ENCODE measurements at regions of chr7 and their contacts with region 1.

Region 1: GRCh38 chr7:23474094-23474828 is 4.0 kb upstream of the IGF2BP3 start:
- DNase-seq: peak; percentile 91
- H3K4me3 Mint-ChIP-seq: peak overlapping the region; percentile 76
- H3K27ac Mint-ChIP-seq: peak overlapping the region; percentile 30
- H3K4me1 Mint-ChIP-seq: peaks cover 22% of the 10 kb centered on the region
- H3K27me3 Mint-ChIP-seq: peaks cover 57% of the 10 kb centered on the region

Region 2: DNA sequence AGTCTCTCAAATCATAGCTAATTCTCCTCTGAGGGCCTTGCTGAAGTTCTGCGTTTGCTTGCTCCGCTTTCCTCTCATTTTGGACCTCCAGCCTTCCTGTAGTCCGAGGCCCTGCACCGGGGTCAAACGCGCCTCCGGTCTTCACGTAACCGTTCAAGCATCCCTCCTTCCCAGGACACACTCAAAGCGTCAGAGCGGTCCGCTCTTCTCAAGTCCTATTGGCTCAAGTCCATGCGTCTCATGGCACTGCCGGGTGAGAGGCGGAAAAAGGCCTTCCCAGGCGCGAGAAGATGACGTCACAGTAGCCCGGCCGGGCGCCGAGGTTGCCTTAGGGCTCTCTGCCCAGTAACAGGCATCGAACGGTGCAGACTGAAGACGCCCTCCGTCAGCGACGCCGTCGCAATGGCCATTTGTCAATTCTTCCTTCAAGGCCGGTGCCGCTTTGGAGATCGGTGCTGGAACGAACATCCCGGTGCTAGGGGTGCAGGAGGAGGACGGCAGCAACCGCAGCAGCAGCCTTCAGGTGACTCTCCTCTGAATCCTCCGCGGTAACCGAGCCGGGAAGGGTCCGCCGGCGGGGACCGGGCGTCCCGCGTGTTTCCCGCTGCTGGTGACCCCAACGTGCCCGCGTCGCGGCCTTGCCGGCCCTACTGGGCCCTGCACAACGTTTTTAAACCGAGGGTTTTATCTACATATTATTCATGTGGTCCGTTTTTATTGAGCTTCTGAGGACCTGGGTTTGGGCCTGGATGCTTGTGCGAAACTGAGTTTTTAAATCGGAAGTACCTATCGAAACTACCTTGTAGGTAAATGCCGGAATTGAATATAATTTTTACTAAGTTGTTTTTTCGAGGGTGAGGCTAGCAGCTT is 292.3 kb before region 1 on chr7 and contains the start of gene NUP42:
- CTCF ChIA-PET with region 1: no interaction called
- intact Hi-C with region 1: loop called (anchors 2 kb)
- DNase-seq: peak; percentile 98
- H3K4me3 Mint-ChIP-seq: peak within 1 kb of the TSS; percentile 99
- H3K27ac Mint-ChIP-seq: peak within 1 kb of the TSS; percentile 99
- H3K4me1 Mint-ChIP-seq: peaks cover 35% of the 10 kb centered on the region
- H3K27me3 Mint-ChIP-seq: no peaks in the 10 kb centered on the region
- total RNA-seq, gene NUP42: 15.2 to 17.0 TPM

Region 3: DNA sequence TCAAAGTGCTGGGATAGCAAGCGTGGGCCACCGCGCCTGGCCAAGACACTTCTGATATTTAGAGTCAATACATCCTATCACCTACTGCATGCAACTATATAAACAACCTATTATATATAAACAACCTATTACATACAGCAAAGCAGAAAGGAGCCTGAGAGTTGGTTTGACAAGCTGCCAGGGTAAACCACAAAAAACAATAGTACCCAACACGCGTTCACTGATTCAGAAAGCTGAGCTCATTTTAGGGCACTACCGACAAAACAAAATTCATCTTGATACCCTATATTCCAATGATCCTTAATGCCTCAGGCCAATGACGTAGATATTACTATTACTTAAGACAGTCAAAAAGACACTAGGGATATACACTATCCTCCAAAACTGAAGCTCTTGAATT is 158.9 kb before region 1 on chr7:
- CTCF ChIA-PET with region 1: no interaction called
- intact Hi-C with region 1: no loop called
- DNase-seq: no peak
- H3K4me3 Mint-ChIP-seq: no peak overlapping the region
- H3K27ac Mint-ChIP-seq: no peak overlapping the region
- H3K4me1 Mint-ChIP-seq: peaks cover 1% of the 10 kb centered on the region
- H3K27me3 Mint-ChIP-seq: no peaks in the 10 kb centered on the region

Region 4: DNA sequence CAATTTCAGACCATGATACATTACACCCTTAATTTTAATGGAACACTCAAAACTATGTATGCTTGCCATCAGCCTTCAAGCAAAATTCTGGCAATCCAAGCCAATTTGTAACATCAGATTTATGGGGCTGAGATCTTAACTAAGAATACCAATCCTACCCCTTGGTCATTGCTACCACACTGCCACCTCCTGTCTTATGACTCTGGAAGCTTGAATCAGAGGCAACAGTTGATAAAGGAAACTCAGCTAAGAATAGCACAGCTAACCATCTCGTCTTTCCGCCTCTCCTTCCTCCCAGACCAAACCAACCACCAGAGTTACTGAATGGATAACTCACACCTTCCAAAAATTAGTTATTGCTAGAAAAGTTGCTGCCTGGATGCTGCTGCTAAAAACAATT is 11.4 kb before region 1 on chr7:
- CTCF ChIA-PET with region 1: interaction called, 12 read pairs
- intact Hi-C with region 1: loop called (anchors 1 kb)
- DNase-seq: peak; percentile 56
- H3K4me3 Mint-ChIP-seq: no peak overlapping the region
- H3K27ac Mint-ChIP-seq: no peak overlapping the region
- H3K4me1 Mint-ChIP-seq: peaks cover 5% of the 10 kb centered on the region
- H3K27me3 Mint-ChIP-seq: peaks cover 64% of the 10 kb centered on the region

Region 5: DNA sequence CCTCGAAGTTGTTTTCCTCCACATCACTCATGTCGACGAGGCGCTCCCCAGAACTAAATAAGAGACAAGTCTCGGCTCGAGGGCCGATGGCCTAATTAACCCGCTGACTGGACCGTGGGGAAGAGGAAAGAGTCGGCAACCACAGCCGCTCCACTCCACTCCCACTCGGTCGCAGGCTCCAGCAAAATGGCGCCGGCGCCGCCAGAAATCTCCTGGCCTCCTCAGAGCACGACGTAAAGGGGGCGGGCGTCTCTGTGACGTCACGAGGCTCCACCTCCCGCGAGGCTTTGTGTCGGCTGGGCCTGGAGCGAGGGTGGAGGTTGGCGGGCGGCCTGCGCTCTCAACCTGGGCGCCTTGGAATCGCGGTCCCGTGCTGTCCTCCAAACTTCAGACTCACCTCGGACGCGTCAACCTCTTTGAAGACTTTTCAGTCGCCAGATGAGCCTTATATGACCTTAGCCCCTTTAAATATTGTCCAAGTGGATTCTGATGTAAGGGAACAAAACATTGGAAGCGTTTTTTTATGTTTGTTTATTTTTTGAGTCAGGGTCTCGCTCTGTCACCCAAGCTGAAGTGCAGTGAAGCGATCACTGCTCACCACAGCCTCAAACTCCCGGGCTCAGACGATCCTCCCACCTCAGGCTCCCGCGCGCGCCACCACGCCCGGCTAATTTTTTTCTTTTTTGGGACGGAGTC is 57.7 kb after region 1 on chr7 and contains the start of gene TRA2A:
- CTCF ChIA-PET with region 1: no interaction called
- intact Hi-C with region 1: loop called (anchors 1 kb)
- DNase-seq: peak; percentile 99
- H3K4me3 Mint-ChIP-seq: peak within 1 kb of the TSS; percentile 99
- H3K27ac Mint-ChIP-seq: peak within 1 kb of the TSS; percentile 100
- H3K4me1 Mint-ChIP-seq: peaks cover 43% of the 10 kb centered on the region
- H3K27me3 Mint-ChIP-seq: no peaks in the 10 kb centered on the region
- total RNA-seq, gene TRA2A: 77.8 to 79.0 TPM

Region 6: DNA sequence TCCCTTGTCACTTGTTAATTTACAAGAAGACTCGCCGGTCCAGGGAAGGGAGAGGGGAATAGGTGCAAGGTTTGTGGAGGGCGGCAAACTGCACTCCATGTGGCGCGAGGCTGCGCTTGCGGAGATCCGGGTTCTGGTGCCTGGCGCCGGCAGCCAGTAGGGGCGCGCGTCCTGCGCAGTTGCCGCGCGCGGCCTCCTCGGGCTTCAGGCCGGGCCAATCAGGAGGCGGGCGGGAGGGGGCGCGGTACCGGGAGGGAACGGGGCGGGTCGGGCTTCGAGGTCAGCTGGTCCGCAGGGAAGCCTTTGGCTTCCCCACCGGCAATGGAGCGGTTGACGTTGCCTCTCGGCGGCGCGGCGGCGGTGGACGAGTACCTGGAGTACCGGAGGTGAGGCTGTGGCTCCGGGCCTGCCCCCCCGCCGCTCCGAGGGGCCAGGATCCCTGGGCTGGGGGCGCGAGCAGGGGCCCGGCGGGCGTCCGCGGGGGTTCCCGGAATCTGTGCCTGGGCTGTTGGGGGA is 205.7 kb after region 1 on chr7 and contains the start of gene FAM221A:
- CTCF ChIA-PET with region 1: no interaction called
- intact Hi-C with region 1: loop called (anchors 2 kb)
- DNase-seq: peak; percentile 86
- H3K4me3 Mint-ChIP-seq: peak within 1 kb of the TSS; percentile 80
- H3K27ac Mint-ChIP-seq: peak within 1 kb of the TSS; percentile 66
- H3K4me1 Mint-ChIP-seq: peaks cover 11% of the 10 kb centered on the region
- H3K27me3 Mint-ChIP-seq: peaks cover 5% of the 10 kb centered on the region
- total RNA-seq, gene FAM221A: 8.7 to 10.0 TPM

Region 7: GRCh38 chr7:23759671-23760391 is 285.6 kb after region 1 on chr7:
- CTCF ChIA-PET with region 1: no interaction called
- intact Hi-C with region 1: no loop called
- DNase-seq: no peak
- H3K4me3 Mint-ChIP-seq: no peak overlapping the region
- H3K27ac Mint-ChIP-seq: no peak overlapping the region
- H3K4me1 Mint-ChIP-seq: peaks cover 2% of the 10 kb centered on the region
- H3K27me3 Mint-ChIP-seq: no peaks in the 10 kb centered on the region

Measured in activated naive CD4-positive, alpha-beta T cell treated with anti-CD3 and anti-CD28 coated beads for 36 hours (primary cell).